ENCODE measurements at regions of chr1 and their contacts with region 1.

Region 1: GRCh38 chr1:243896313-243896712 is 46.3 kb upstream of the AKT3 start:
- DNase-seq: no peak
- H3K4me3 Mint-ChIP-seq: no peak overlapping the region
- H3K27ac Mint-ChIP-seq: no peak overlapping the region
- H3K4me1 Mint-ChIP-seq: no peaks in the 10 kb centered on the region
- H3K27me3 Mint-ChIP-seq: peaks cover 20% of the 10 kb centered on the region
- CTCF ChIP-seq: no peak

Region 2: GRCh38 chr1:243884603-243885002 is 11.7 kb before region 1 on chr1:
- CTCF ChIA-PET with region 1: interaction called, 13 read pairs
- POLR2A ChIA-PET with region 1: interaction called, 3 read pairs
- intact Hi-C with region 1: no loop called
- DNase-seq: no peak
- H3K4me3 Mint-ChIP-seq: no peak overlapping the region
- H3K27ac Mint-ChIP-seq: no peak overlapping the region
- H3K4me1 Mint-ChIP-seq: no peaks in the 10 kb centered on the region
- H3K27me3 Mint-ChIP-seq: peaks cover 21% of the 10 kb centered on the region
- CTCF ChIP-seq: no peak

Region 3: GRCh38 chr1:243933495-243933894 is 37.2 kb after region 1 on chr1:
- CTCF ChIA-PET with region 1: no interaction called
- POLR2A ChIA-PET with region 1: no interaction called
- intact Hi-C with region 1: no loop called
- DNase-seq: no peak
- H3K4me3 Mint-ChIP-seq: no peak overlapping the region
- H3K27ac Mint-ChIP-seq: no peak overlapping the region
- H3K4me1 Mint-ChIP-seq: no peaks in the 10 kb centered on the region
- H3K27me3 Mint-ChIP-seq: no peaks in the 10 kb centered on the region
- CTCF ChIP-seq: no peak